MCF 10A (cell line): ENCODE measurements at regions of chr7 and their contacts with region 1.

Region 1: DNA sequence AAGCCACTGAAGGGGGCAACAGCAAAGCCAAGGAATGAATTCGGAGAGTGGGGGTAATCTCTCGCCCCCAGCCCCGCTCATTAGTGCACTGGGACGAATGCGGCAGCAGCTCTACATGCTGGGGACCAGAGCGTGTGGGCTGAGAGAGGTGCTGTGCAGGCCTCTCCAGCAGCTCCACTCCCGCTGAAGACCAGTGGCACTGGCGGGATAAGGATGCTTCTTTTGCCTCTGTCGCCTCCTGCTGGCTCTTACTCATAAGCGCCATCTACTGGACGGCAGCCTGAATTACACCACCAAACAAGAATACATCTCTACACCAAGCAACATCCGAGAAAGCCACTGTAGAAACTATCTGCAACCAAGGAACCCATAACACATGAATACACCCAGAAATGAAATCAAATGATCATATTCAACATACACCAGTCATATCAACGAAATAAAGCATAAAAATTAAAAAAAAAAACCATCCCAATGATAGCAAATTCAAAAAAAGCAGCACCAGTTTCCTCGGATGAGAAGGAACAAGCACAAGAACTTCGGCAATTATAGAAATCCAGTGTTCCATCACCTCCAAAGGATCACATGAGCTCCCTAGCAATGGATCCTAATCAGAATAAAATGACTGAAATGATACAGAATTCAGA is 79.0 kb upstream of the TMEM168 start:
- DNase-seq: peak; percentile 73
- H3K4me3 Mint-ChIP-seq: no peak overlapping the region
- H3K27ac Mint-ChIP-seq: no peak overlapping the region
- H3K4me1 Mint-ChIP-seq: peaks cover 5% of the 10 kb centered on the region
- H3K27me3 Mint-ChIP-seq: no peaks in the 10 kb centered on the region
- CTCF ChIP-seq: peak; percentile 93

Region 2: GRCh38 chr7:112770084-112770483 is 99.2 kb before region 1 on chr7:
- CTCF ChIA-PET with region 1: interaction called, 13 read pairs
- POLR2A ChIA-PET with region 1: no interaction called
- intact Hi-C with region 1: no loop called
- DNase-seq: peak; percentile 87
- H3K4me3 Mint-ChIP-seq: no peak overlapping the region
- H3K27ac Mint-ChIP-seq: peak overlapping the region; percentile 82
- H3K4me1 Mint-ChIP-seq: peaks cover 11% of the 10 kb centered on the region
- H3K27me3 Mint-ChIP-seq: no peaks in the 10 kb centered on the region
- CTCF ChIP-seq: no peak

Region 3: DNA sequence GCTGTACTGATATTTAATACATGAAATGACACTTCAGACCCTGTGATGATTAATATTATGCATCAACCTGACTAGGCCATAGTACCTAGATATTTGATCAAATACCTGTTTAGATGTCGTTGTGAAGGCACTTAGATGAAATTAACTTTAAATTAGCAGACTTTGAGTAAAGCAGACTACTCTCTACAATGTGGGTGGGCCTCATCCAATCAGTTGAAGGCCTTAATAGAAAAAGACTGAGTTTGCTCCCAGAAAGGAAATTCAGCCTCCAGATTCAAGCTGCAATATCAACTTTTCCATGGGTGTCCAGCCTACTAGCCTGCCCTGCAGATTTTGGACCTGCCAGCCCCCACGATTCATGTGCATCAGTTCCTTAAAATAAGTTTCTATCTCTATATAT is 10.4 kb before region 1 on chr7:
- CTCF ChIA-PET with region 1: interaction called, 20 read pairs
- POLR2A ChIA-PET with region 1: interaction called, 4 read pairs
- intact Hi-C with region 1: no loop called
- DNase-seq: no peak
- H3K4me3 Mint-ChIP-seq: no peak overlapping the region
- H3K27ac Mint-ChIP-seq: no peak overlapping the region
- H3K4me1 Mint-ChIP-seq: no peaks in the 10 kb centered on the region
- H3K27me3 Mint-ChIP-seq: no peaks in the 10 kb centered on the region
- CTCF ChIP-seq: no peak

Region 4: DNA sequence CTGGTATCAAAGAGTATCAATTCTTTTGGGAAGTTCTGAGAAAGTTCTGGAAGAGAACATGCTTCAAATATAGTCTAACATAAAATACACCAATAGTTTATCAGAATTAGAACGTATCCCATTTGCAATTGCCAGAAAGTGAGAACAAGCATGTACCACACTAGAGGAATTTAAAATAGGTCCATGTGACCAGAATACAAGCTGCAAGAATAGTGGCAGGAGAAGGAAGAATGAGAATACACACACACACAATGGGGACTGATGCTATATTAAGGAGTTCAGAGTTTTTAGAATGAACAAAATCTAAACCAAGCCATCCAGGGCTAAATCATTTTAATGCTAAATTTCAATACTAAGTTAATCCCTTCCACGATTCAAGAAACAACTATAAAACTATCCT is 20.0 kb after region 1 on chr7:
- CTCF ChIA-PET with region 1: interaction called, 12 read pairs
- POLR2A ChIA-PET with region 1: no interaction called
- intact Hi-C with region 1: no loop called
- DNase-seq: no peak
- H3K4me3 Mint-ChIP-seq: no peak overlapping the region
- H3K27ac Mint-ChIP-seq: no peak overlapping the region
- H3K4me1 Mint-ChIP-seq: no peaks in the 10 kb centered on the region
- H3K27me3 Mint-ChIP-seq: no peaks in the 10 kb centered on the region
- CTCF ChIP-seq: no peak